ENCODE measurements at regions of chr18 and their contacts with region 1.

Region 1: DNA sequence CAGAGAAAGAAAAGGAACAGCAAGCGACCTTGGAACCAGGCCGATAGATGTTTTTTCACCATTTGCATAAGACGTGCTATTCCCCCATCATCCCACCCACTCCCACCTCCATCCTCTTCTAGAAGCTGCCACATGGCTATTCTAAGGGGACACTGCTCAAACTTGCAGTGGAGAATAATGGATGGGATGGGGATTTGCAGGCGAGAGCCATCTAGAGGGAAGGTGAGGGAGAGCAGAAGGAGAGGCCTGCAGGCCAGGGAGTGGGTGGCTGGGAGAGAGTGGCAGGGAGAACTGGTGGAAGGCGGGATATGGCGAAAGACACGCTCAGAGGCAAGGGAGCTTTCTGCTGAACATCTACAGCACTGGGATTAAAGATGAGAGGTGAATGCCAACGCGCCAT is 84.9 kb downstream of the MAPK4 start:
- DNase-seq: peak; percentile 56 to 61
- H3K4me3 ChIP-seq: no peak overlapping the region
- H3K27ac ChIP-seq: no peak overlapping the region
- H3K4me1 ChIP-seq: no peaks in the 10 kb centered on the region; a peak in 1 of 7 replicates
- H3K27me3 ChIP-seq: no peaks in the 10 kb centered on the region
- CTCF ChIP-seq: peak; percentile 74 to 89 (median 78)
- EP300 ChIP-seq: no peak
- POLR2A ChIP-seq: no peak
- RAD21 ChIP-seq: peak; percentile 64 to 70

Region 2: DNA sequence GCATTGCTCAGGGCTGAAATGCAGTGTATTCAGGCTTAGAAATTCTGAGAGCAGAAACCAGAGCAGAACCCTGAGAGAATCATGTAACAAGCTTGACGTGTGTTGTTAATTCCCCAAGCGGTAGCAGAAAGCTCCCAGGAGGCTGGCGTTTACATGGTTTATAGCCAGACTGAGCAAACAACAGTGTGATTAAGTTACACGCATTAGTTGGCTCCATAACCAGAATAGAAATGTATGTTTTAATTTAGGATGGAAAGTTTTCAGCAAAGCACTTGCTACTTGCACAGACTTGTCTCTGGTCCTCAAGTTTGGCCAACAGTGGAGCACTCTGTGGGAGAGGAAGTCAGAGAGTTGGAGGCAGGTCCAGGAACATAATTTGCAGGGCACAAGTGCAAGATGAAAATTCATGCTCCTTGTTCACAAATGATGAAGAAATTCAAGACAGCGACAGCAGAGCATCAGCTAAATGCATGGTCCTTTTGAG is 15.6 kb before region 1 on chr18:
- CTCF ChIA-PET with region 1: interaction called, 14 read pairs
- POLR2A ChIA-PET with region 1: no interaction called
- DNase-seq: no peak
- H3K4me3 ChIP-seq: no peak overlapping the region
- H3K27ac ChIP-seq: no peak overlapping the region
- H3K4me1 ChIP-seq: peaks cover 0 to 10% (median 1%) of the 10 kb centered on the region in 4 experiments; a peak in 3 of 7 replicates
- H3K27me3 ChIP-seq: no peaks in the 10 kb centered on the region; a peak in 1 of 7 replicates
- CTCF ChIP-seq: no peak
- EP300 ChIP-seq: no peak
- POLR2A ChIP-seq: no peak
- RAD21 ChIP-seq: no peak

Region 3: GRCh38 chr18:50775222-50775621 is 130.4 kb after region 1 on chr18:
- CTCF ChIA-PET with region 1: interaction called, 17 read pairs
- POLR2A ChIA-PET with region 1: no interaction called
- DNase-seq: no peak
- H3K4me3 ChIP-seq: no peak overlapping the region
- H3K27ac ChIP-seq: no peak overlapping the region
- H3K4me1 ChIP-seq: peaks cover 0 to 3% (median 2%) of the 10 kb centered on the region in 4 experiments; a peak in 3 of 7 replicates
- H3K27me3 ChIP-seq: no peaks in the 10 kb centered on the region
- CTCF ChIP-seq: no peak
- EP300 ChIP-seq: no peak
- POLR2A ChIP-seq: no peak
- RAD21 ChIP-seq: no peak

Region 4: GRCh38 chr18:50866765-50867164 is 222.0 kb after region 1 on chr18:
- CTCF ChIA-PET with region 1: no interaction called
- POLR2A ChIA-PET with region 1: no interaction called
- DNase-seq: no peak
- H3K4me3 ChIP-seq: no peak overlapping the region
- H3K27ac ChIP-seq: no peak overlapping the region
- H3K4me1 ChIP-seq: peaks cover 0 to 3% (median 0%) of the 10 kb centered on the region in 4 experiments; a peak in 2 of 7 replicates
- H3K27me3 ChIP-seq: no peaks in the 10 kb centered on the region
- CTCF ChIP-seq: no peak
- EP300 ChIP-seq: no peak
- POLR2A ChIP-seq: no peak
- RAD21 ChIP-seq: peak in 1 of 2 experiments; percentile 23; a peak in 2 of 4 replicates